ENCODE measurements at regions of chr3 and their contacts with region 1.

Region 1: DNA sequence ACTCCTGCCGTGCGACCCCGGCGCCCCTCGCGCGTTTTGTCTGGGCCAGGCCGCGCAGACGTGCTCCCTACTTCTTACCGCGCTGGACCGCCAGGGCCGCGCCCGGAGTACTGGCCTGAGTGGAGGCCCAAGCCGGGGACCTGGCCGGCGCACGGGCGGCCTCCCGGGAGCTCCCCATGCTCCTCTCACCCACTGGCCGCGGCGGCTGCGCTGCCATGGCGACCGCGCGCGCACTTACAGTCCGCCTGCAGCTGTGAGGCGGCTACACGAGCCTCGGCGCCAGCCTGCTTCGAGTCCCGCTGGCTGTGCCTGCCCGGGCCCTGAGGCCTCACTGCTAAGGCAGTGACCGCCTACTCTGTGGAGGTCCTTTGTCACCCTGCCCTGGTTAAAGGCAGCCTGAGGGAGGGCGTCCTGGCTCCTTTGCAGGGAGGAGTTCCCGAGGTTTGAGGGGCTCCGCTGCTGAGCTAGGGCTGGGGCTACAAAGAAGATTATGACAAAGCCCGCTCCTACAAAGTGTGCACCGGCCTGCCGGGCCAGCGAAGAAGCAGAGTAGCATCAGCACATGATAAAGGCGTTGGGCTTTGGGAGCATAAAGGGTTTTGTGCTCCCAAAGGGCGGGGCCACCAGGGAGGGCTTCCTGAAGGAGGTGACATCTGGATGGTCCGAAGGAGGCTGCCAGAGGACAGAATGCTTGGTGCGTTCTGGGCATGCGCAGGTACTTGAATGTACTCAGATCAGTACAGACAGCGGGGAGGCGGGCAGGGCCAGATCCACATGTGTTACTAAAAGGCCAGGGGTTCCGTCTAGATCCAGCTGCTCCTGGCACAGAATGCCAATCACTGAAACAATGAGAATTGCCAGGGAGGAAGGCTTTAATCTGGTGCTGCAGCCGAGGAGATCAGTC is at the starts of genes LRRC34 and LRRIQ4:
- DNase-seq: peak; percentile 70
- ATAC-seq: peak; percentile 56
- H3K4me3 Mint-ChIP-seq: peak within 1 kb of the TSS; percentile 85
- H3K27ac Mint-ChIP-seq: peak within 1 kb of the TSS; percentile 97
- H3K4me1 Mint-ChIP-seq: peaks cover 37% of the 10 kb centered on the region
- H3K27me3 Mint-ChIP-seq: no peaks in the 10 kb centered on the region
- CTCF ChIP-seq: no peak
- total RNA-seq, gene LRRC34: 4.2 and 5.7 TPM in 2 replicates
- total RNA-seq, gene LRRIQ4: 0.29 and 0.40 TPM in 2 replicates

Region 2: GRCh38 chr3:169526246-169526645 is 286.3 kb before region 1 on chr3:
- CTCF ChIA-PET with region 1: no interaction called
- POLR2A ChIA-PET with region 1: no interaction called
- intact Hi-C with region 1: no loop called
- DNase-seq: no peak
- ATAC-seq: no peak
- H3K4me3 Mint-ChIP-seq: no peak overlapping the region
- H3K27ac Mint-ChIP-seq: no peak overlapping the region
- H3K4me1 Mint-ChIP-seq: no peaks in the 10 kb centered on the region
- H3K27me3 Mint-ChIP-seq: no peaks in the 10 kb centered on the region
- CTCF ChIP-seq: no peak

Region 3: DNA sequence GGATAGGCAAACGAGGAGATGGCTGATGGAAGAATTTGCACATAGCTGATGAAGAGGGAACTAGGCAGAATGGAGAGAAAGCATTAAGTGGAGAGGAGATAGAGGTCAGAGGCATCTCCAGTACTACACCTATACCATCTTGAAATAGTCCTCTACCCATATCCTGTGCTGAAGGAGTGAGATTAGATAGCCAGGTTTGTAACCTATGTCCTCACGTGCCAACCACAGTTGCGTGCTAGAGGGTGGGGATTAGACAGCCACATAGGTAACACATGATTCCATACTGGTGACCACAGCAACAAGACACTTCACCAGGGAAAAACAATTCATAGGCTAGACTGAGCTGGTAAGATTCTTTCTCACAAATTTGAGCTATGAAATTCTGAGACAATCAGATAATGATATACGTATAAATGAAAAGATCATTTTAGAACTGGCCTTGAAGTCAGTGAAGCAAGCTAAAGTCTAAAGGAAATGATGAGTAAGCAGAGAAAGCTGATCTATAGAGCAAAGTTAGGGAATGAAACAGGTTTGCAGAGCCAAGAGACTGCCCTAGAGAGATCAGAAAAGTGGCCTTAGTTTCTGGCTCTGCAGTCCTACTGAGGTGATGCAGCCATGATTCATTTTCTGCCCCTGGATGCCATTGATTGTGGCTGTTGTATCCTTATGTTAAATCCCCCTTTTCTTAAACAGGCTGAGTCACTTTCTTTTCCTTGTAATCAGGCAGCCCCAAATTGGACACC is 21.7 kb before region 1 on chr3:
- CTCF ChIA-PET with region 1: no interaction called
- POLR2A ChIA-PET with region 1: no interaction called
- intact Hi-C with region 1: loop called (anchors 2 kb)
- DNase-seq: no peak
- ATAC-seq: no peak
- H3K4me3 Mint-ChIP-seq: no peak overlapping the region
- H3K27ac Mint-ChIP-seq: no peak overlapping the region
- H3K4me1 Mint-ChIP-seq: peaks cover 3% of the 10 kb centered on the region
- H3K27me3 Mint-ChIP-seq: no peaks in the 10 kb centered on the region
- CTCF ChIP-seq: no peak

Region 4: DNA sequence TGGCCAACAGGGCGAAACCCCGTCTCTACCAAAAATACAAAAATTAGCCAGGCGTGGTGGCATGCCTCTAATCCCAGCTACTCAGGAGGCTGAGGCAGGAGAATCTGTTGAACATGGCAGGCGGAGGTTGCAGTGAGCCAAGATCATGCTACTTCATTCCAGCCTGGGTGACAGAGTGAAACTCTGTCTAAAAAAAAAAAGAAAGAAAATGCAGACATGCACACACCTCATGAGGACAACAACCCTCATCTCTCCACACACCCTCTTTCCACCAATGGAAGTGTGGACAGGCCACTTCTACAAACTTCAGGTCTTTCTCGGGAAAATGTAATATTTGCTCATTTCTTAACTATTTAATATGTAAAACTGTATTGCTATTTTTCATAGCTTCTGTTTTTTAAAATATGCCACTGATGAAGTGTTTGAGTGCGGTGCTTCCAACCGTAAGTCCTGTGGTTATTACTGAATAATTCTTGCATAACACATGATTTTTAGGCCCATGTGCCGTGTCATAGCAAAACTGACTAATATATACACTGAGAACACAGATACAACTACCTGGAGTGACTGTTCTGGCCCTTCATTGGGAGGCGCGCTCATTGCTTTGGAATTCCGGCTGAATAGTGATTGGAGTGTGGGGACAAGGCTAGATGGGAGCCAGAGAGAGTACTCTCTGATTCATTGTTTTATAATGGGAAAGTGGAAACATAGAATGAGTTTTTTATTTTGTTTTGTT is 34.0 kb after region 1 on chr3:
- CTCF ChIA-PET with region 1: interaction called, 13 read pairs
- POLR2A ChIA-PET with region 1: interaction called, 22 read pairs
- intact Hi-C with region 1: loop called (anchors 1 kb)
- DNase-seq: no peak
- ATAC-seq: peak; percentile 95
- H3K4me3 Mint-ChIP-seq: peak overlapping the region; percentile 67
- H3K27ac Mint-ChIP-seq: peak overlapping the region; percentile 92
- H3K4me1 Mint-ChIP-seq: peaks cover 57% of the 10 kb centered on the region
- H3K27me3 Mint-ChIP-seq: no peaks in the 10 kb centered on the region
- CTCF ChIP-seq: no peak

Region 5: GRCh38 chr3:169966428-169966950 is 153.9 kb after region 1 on chr3 and contains the start of gene SEC62:
- CTCF ChIA-PET with region 1: no interaction called
- POLR2A ChIA-PET with region 1: interaction called, 15 read pairs
- intact Hi-C with region 1: loop called (anchors 1 kb)
- DNase-seq: peak; percentile 94
- ATAC-seq: peak; percentile 86
- H3K4me3 Mint-ChIP-seq: peak within 1 kb of the TSS; percentile 99
- H3K27ac Mint-ChIP-seq: peak within 1 kb of the TSS; percentile 99
- H3K4me1 Mint-ChIP-seq: peaks cover 87% of the 10 kb centered on the region
- H3K27me3 Mint-ChIP-seq: no peaks in the 10 kb centered on the region
- CTCF ChIP-seq: no peak
- total RNA-seq, gene SEC62: 140 and 165 TPM in 2 replicates

Region 6: GRCh38 chr3:170044795-170045244 is 232.2 kb after region 1 on chr3:
- CTCF ChIA-PET with region 1: no interaction called
- POLR2A ChIA-PET with region 1: interaction called, 3 read pairs
- intact Hi-C with region 1: loop called (anchors 2 kb)
- DNase-seq: peak; percentile 45
- ATAC-seq: peak; percentile 77
- H3K4me3 Mint-ChIP-seq: peak overlapping the region; percentile 64
- H3K27ac Mint-ChIP-seq: peak overlapping the region; percentile 87
- H3K4me1 Mint-ChIP-seq: peaks cover 65% of the 10 kb centered on the region
- H3K27me3 Mint-ChIP-seq: no peaks in the 10 kb centered on the region
- CTCF ChIP-seq: no peak

Region 7: DNA sequence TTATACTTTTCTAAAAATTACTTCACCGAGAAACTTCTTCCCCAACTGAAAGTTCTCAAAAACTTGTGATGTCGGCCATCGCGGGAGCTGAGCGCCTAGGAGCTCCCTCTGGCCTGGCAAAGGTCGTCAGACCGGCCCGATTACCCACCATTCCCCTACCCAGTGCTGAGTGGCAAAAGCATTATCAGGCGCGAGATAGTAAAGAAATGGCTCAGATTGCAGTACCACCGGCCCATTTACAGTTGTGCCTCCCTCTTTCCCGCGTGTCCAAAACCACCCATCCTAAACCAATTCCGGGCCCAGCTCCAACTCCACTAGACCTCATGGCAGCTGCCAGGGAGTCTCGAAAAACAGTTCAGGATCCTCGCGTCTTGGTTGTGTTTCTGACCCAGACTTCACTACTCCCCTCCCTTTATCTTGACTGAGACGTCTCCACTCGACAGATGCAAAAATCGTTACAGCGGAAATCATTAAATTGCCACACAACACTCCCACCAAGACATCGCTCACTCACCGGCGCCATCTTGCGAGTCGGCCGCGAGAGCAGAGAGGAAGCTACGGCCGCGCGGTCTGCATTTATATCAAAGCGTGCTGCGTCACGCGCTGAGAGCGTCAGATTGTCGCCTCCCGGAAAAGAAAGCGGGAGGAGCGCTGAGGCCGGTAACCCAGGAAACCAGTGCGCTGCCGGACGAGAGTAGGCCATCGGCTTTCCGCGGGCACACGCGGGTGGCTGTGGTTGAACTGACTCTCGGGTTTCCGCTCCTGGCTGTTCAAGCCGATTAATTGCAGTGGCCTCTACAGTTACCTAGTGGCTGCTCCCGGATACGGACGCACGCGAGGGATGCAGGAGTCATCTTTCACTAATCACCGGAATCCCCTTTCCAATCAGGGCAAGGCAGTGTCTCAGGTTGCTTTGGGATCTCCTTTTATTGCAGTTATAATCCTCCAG is 1057.3 kb after region 1 on chr3 and contains the start of gene RPL22L1:
- CTCF ChIA-PET with region 1: no interaction called
- POLR2A ChIA-PET with region 1: interaction called, 6 read pairs
- intact Hi-C with region 1: loop called (anchors 1 kb)
- DNase-seq: peak; percentile 89
- ATAC-seq: peak; percentile 86
- H3K4me3 Mint-ChIP-seq: peak within 1 kb of the TSS; percentile 95
- H3K27ac Mint-ChIP-seq: peak within 1 kb of the TSS; percentile 97
- H3K4me1 Mint-ChIP-seq: peaks cover 34% of the 10 kb centered on the region
- H3K27me3 Mint-ChIP-seq: no peaks in the 10 kb centered on the region
- CTCF ChIP-seq: no peak
- total RNA-seq, gene RPL22L1: 109 and 124 TPM in 2 replicates

Measured in activated B cell treated with CpG ODN at 0.5 μM for 24 hours (primary cell).